Dendritic cell treated with granulocyte-macrophage colony-stimulating factor and Interleukin-4, amounts not matched to agents 40 ng/mL and 50 ng/mL, for 4 days (primary cell): ENCODE measurements at regions of chr4 and their contacts with region 1.

Region 1: GRCh38 chr4:7649741-7650531 is 215.2 kb upstream of the PSAPL1 start:
- H3K4me3 Mint-ChIP-seq: no peak overlapping the region
- H3K27ac Mint-ChIP-seq: peak overlapping the region; percentile 60
- H3K4me1 Mint-ChIP-seq: peaks cover 88% of the 10 kb centered on the region
- H3K27me3 Mint-ChIP-seq: peaks cover 55% of the 10 kb centered on the region

Region 2: GRCh38 chr4:7634661-7635251 is 15.2 kb before region 1 on chr4:
- intact Hi-C with region 1: loop called (anchors 2 kb)
- H3K4me3 Mint-ChIP-seq: no peak overlapping the region
- H3K27ac Mint-ChIP-seq: peak overlapping the region; percentile 28
- H3K4me1 Mint-ChIP-seq: peaks cover 54% of the 10 kb centered on the region
- H3K27me3 Mint-ChIP-seq: peaks cover 42% of the 10 kb centered on the region

Region 3: GRCh38 chr4:7744142-7744804 is 94.3 kb after region 1 on chr4:
- intact Hi-C with region 1: loop called (anchors 10 kb)
- H3K4me3 Mint-ChIP-seq: peak overlapping the region; percentile 43
- H3K27ac Mint-ChIP-seq: peak overlapping the region; percentile 83
- H3K4me1 Mint-ChIP-seq: peaks cover 64% of the 10 kb centered on the region
- H3K27me3 Mint-ChIP-seq: peaks cover 24% of the 10 kb centered on the region